ENCODE measurements at regions of chr4 and their contacts with region 1.

Region 1: DNA sequence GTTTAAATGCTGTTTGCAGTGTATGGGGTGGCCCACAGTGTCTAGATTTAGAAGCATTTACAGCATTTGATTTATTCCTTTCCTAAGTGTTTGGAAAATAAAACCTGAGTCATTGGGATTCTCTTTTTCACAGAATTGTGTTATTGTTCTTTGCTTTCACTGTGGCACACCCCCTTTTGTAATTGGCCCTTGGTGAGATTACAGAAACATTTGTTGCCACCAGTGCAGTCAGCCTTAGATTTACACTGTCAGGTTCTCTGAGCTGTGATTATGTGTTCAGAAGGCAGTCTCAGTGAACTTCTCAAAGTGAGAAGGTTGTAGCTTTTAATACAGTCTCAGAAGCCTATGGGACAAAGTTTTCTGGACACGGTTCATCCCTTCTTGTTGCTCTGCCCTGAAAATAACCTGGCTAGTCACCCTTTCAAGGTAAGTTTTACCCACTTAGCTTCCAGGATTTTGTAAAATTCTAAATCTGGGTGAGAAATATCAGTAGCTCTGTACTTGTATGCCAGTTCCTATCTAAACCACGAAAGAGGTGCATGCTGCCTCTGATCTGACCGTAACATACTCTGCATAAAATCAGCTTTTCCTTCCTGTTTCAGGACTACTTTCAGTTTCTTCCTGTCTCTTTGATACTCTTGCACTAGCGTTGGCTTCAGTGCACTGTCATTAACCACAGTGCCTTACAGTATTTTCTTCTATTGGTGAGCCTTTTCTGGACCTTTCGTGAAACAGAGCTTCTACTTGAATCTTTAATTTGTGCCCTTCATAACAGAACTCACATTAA is 12.6 kb downstream of the RUFY3 start:
- DNase-seq: peak; percentile 48
- H3K4me3 Mint-ChIP-seq: peak overlapping the region; percentile 62
- H3K27ac Mint-ChIP-seq: peak overlapping the region; percentile 83
- H3K4me1 Mint-ChIP-seq: peaks cover 36% of the 10 kb centered on the region
- H3K27me3 Mint-ChIP-seq: no peaks in the 10 kb centered on the region

Region 2: GRCh38 chr4:70601422-70602039 is 132.8 kb before region 1 on chr4:
- CTCF ChIA-PET with region 1: interaction called, 10 read pairs
- POLR2A ChIA-PET with region 1: no interaction called
- DNase-seq: peak; percentile 70
- H3K4me3 Mint-ChIP-seq: no peak overlapping the region
- H3K27ac Mint-ChIP-seq: no peak overlapping the region
- H3K4me1 Mint-ChIP-seq: no peaks in the 10 kb centered on the region
- H3K27me3 Mint-ChIP-seq: no peaks in the 10 kb centered on the region

Region 3: GRCh38 chr4:70687821-70688794 is 46.3 kb before region 1 on chr4 and contains the start of gene UTP3:
- CTCF ChIA-PET with region 1: interaction called, 27 read pairs
- POLR2A ChIA-PET with region 1: interaction called, 35 read pairs
- DNase-seq: peak; percentile 92
- H3K4me3 Mint-ChIP-seq: peak within 1 kb of the TSS; percentile 97
- H3K27ac Mint-ChIP-seq: peak within 1 kb of the TSS; percentile 93
- H3K4me1 Mint-ChIP-seq: peaks cover 39% of the 10 kb centered on the region
- H3K27me3 Mint-ChIP-seq: no peaks in the 10 kb centered on the region
- total RNA-seq, gene UTP3: 28.7 to 28.9 TPM

Region 4: DNA sequence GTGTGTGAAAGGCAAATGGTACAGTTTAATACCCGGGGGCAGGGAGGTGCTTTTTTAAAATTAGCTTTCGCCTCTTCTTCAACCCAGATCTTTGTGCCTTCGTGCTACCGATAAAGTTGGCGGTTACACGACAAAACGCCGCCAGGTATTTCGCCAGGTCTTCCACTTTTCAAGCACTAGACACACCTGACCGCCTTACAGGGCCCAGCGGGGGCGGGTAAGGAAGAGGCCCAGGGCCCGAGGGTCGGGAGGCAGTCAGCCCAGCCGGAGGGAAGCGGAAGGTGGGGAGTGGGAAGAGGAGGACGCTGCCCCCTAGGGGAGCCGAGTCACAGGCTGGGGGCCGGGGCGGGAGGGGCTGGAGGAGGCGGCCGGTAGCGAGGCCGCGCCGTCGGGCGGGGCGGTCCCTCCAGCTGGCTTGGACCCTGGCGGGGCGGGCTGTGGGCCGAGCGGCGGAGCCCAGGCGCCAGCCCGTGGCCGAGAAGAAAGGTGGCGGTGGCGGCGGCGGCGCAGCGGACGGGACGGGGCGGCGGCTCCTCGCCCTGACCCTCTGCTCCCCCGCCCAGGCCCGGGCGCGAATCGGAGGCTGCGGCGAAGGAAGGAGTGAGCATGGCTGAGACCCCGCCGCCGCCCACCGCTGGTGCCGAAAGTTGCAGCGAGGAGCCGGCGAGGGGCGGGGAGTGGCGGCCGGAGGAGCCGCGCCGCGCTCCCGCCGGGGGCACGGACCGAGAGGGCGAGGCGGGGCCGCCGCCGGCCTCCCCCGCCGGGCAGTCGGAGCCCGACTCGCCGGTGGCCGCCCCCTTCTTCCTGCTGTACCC is 29.8 kb before region 1 on chr4:
- CTCF ChIA-PET with region 1: interaction called, 34 read pairs
- POLR2A ChIA-PET with region 1: interaction called, 40 read pairs
- DNase-seq: peak; percentile 59
- H3K4me3 Mint-ChIP-seq: peak overlapping the region; percentile 80
- H3K27ac Mint-ChIP-seq: peak overlapping the region; percentile 31
- H3K4me1 Mint-ChIP-seq: peaks cover 22% of the 10 kb centered on the region
- H3K27me3 Mint-ChIP-seq: no peaks in the 10 kb centered on the region

Region 5: DNA sequence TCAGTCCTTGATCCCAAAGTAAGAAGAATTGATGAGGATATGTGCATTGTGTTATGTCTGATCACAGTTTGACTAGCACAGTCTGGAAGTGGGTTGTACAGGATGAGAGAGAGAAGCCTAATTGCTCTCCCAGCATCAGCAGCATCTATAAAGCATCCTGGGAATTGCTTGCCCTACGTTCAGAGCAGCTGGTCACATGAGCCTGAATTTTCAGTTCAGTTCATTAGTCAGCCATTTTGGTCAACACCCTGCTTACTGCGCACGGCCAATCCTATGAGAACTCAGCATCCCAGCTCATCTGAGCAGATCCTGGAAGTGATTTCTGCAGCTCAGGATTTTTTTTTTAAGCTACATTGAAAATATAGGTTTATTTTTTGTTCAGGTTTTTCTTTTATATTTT is 12.6 kb before region 1 on chr4 and contains the start of gene RUFY3:
- CTCF ChIA-PET with region 1: interaction called, 20 read pairs
- POLR2A ChIA-PET with region 1: interaction called, 26 read pairs
- DNase-seq: no peak
- H3K4me3 Mint-ChIP-seq: no peak within 1 kb of the TSS
- H3K27ac Mint-ChIP-seq: no peak within 1 kb of the TSS
- H3K4me1 Mint-ChIP-seq: peaks cover 13% of the 10 kb centered on the region
- H3K27me3 Mint-ChIP-seq: no peaks in the 10 kb centered on the region
- total RNA-seq, gene RUFY3: 9.1 to 9.7 TPM

Region 6: GRCh38 chr4:70839589-70840093 is 105.3 kb after region 1 on chr4 and contains the start of gene GRSF1:
- CTCF ChIA-PET with region 1: interaction called, 15 read pairs
- POLR2A ChIA-PET with region 1: interaction called, 23 read pairs
- DNase-seq: peak; percentile 95
- H3K4me3 Mint-ChIP-seq: peak within 1 kb of the TSS; percentile 85
- H3K27ac Mint-ChIP-seq: peak within 1 kb of the TSS; percentile 90
- H3K4me1 Mint-ChIP-seq: peaks cover 29% of the 10 kb centered on the region
- H3K27me3 Mint-ChIP-seq: no peaks in the 10 kb centered on the region
- total RNA-seq, gene GRSF1: 63.5 to 63.8 TPM

Region 7: GRCh38 chr4:70901984-70902576 is 167.7 kb after region 1 on chr4 and contains the start of gene MOB1B:
- CTCF ChIA-PET with region 1: interaction called, 10 read pairs
- POLR2A ChIA-PET with region 1: interaction called, 3 read pairs
- DNase-seq: peak; percentile 89
- H3K4me3 Mint-ChIP-seq: peak within 1 kb of the TSS; percentile 95
- H3K27ac Mint-ChIP-seq: peak within 1 kb of the TSS; percentile 80
- H3K4me1 Mint-ChIP-seq: peaks cover 18% of the 10 kb centered on the region
- H3K27me3 Mint-ChIP-seq: no peaks in the 10 kb centered on the region
- total RNA-seq, gene MOB1B: 15.3 to 15.9 TPM

Measured in activated CD4-positive, alpha-beta memory T cell treated with anti-CD3 and anti-CD28 coated beads, Interleukin-2, amount 10 ng/mL, durations not matched to agents 7 days and 5 days (primary cell).